GM18951 (cell line): ENCODE measurements at regions of chr2 and their contacts with region 1.

Region 1: DNA sequence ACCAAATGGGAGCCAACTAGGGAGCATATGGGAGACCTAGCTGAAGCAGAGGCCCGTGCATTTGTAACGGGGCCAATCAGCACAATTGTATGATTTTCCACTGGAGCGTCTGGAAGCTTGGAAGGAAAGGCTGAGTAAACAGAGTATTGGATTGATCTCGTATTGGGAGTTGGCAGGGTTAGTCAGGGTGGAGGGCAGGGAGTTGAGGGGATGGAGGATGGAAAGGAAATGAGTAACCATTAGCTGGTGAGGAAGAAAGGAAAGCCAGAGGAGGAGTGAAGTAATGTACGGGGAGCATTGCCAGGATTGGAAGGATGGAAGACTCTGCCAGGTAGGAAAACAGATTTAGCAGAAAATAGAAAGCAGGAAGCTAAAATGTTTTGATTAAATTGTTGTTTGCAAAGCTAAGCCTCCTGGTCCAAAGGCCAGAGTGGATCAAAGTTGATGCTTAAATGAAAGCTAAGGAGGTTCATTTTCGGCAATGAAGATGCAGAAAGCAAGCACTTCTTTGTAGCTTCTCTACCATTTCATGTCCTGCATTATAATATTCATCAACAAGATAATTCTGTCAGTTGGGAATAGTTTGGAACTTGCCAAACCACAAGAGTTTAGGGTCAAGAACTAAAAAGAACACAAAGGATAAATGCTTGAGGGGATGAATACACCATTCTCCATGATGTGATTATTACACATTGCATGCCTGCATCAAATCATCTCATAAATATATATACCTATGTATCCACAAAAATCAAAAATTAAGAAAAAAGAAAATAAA is 75.6 kb upstream of the TTN start:
- POLR2A ChIP-seq: no peak

Region 2: DNA sequence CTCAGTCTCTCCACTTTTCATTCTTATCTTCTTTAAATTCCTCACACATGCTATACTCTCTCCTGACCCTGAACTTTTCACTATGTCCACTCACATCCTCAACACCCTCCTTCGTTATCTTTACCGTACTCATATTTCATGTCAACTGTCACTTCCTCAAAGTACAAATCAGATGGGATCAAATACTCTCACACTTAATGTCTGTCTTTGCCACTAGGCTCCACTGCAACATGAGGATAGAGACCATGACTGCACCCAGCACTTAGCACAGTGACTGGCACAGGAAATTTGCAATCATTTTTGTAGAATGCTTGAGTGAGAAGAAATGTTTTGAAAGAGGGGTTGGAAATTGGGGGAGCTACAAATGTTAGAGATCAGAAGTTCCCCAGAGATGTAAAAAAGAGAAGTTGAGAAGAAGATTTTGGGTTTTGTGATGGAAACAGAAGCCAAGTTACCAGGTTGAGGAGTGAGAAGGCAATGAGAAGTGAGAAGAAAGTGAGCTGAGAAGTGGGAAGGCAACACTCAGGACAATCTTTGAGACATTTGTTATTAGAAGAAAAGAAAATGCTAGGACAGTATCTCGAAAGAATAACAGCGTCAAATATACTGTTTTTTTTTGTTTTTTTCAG is 80.1 kb after region 1 on chr2:
- in situ Hi-C with region 1: no loop called
- POLR2A ChIP-seq: no peak

Region 3: DNA sequence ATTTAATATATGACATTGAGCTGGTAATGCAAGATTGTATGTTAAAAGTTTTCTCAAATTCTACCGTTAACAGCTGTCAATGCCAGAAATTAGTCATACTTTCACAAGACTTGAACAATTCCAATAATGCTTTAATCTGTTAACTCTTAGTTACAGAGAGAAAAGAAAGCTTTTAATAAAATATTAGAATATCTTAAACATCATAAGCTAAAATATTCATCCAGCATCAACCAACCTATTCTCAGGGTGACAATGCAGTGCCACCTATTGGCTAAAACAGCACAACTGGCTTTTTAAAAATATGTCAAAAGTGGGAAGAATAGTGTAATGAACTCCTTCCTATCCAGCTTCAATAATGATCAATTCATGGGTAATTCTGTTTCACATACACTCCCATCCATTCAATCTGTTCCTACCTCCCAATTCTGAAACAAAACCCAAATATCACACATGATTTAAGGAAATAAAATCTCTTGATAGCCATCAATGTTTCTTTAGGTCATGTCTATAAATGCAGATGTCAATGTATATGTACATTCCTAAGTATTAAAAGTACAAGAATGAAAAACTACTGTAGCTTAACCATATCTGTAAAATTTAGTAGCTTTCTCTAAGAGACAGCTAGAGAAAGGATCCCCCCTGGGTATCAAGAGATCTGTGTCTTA is 246.9 kb after region 1 on chr2:
- in situ Hi-C with region 1: loop called (anchors 10 kb)
- POLR2A ChIP-seq: no peak

Region 4: DNA sequence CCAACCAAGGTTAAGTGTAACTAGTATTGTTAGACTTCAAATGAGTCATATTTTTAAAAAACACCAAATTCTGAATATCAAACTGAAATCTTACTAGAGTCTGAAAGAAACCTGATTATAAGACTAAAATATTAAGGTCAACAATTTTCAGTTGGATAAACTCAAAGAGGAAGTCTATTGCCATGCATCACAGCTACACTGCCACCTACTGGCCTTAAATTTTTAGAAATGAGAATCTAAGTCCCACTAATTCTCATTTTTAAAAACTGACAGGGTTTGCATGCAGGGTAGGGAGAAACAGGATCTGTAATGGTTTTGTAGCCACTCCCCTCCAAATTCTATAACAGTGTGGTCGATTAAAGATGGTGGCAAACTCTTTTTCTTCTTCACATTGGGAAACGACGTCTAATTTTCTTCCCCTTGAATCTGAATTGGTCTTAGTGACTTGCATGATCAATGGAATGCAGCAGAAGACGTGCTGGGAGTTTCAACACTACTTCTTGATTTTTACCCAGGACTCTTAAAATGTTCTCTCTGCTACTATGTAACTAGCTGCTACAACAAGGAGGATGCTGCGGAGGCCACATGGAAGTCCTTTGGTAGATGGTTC is 557.9 kb after region 1 on chr2:
- in situ Hi-C with region 1: no loop called
- POLR2A ChIP-seq: no peak